Caco-2 (cell line): ENCODE measurements at regions of chr16 and their contacts with region 1.

Region 1: DNA sequence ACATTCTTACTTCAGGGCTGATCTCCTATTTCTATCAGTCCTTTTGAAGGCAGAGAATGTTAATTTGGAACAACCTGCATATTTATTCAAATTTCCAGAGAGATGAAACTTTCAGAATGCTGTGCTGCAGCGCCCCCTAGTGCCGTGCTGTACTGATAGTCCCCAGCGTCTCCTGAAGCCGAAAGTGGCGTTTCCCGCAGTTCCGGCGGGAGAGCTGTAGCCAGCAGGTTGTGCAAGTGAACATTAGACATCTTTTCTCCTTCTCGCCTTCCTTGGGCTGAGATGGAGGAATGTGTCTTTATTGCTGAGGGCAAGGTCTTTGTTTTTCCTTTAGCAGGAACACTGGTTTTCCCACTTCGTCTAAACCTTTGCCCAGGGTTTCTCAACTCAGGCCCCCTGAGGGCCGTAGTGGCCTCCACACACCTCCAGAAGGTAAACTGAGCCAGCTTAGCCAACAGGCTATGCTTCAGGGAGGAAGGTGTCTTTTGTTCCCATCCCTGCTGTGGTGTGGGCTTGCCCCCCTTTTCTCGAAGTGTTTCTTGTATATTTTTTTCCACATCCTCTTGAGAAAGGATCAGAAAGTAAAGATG is 26.4 kb downstream of the USP10 start:
- DNase-seq: peak; percentile 94 to 95
- H3K4me3 ChIP-seq: peak overlapping the region; percentile 21
- H3K4me3 Mint-ChIP-seq: peak overlapping the region; percentile 68
- H3K27ac Mint-ChIP-seq: peak overlapping the region; percentile 61
- H3K4me1 ChIP-seq: peaks cover 56% of the 10 kb centered on the region
- H3K4me1 Mint-ChIP-seq: peaks cover 62% of the 10 kb centered on the region
- H3K27me3 ChIP-seq: no peaks in the 10 kb centered on the region
- H3K27me3 Mint-ChIP-seq: no peaks in the 10 kb centered on the region
- CTCF ChIP-seq: peak; percentile 98 to 99

Region 2: GRCh38 chr16:84511180-84511824 is 214.9 kb before region 1 on chr16:
- CTCF ChIA-PET with region 1: interaction called, 4 read pairs
- POLR2A ChIA-PET with region 1: no interaction called
- intact Hi-C with region 1: loop called (anchors 1 kb)
- DNase-seq: peak; percentile 78 to 88
- H3K4me3 ChIP-seq: no peak overlapping the region
- H3K4me3 Mint-ChIP-seq: peak overlapping the region; percentile 21
- H3K27ac Mint-ChIP-seq: peak overlapping the region; percentile 56
- H3K4me1 ChIP-seq: peaks cover 36% of the 10 kb centered on the region
- H3K4me1 Mint-ChIP-seq: peaks cover 43% of the 10 kb centered on the region
- H3K27me3 ChIP-seq: no peaks in the 10 kb centered on the region
- H3K27me3 Mint-ChIP-seq: no peaks in the 10 kb centered on the region
- CTCF ChIP-seq: peak; percentile 91 to 95

Region 3: DNA sequence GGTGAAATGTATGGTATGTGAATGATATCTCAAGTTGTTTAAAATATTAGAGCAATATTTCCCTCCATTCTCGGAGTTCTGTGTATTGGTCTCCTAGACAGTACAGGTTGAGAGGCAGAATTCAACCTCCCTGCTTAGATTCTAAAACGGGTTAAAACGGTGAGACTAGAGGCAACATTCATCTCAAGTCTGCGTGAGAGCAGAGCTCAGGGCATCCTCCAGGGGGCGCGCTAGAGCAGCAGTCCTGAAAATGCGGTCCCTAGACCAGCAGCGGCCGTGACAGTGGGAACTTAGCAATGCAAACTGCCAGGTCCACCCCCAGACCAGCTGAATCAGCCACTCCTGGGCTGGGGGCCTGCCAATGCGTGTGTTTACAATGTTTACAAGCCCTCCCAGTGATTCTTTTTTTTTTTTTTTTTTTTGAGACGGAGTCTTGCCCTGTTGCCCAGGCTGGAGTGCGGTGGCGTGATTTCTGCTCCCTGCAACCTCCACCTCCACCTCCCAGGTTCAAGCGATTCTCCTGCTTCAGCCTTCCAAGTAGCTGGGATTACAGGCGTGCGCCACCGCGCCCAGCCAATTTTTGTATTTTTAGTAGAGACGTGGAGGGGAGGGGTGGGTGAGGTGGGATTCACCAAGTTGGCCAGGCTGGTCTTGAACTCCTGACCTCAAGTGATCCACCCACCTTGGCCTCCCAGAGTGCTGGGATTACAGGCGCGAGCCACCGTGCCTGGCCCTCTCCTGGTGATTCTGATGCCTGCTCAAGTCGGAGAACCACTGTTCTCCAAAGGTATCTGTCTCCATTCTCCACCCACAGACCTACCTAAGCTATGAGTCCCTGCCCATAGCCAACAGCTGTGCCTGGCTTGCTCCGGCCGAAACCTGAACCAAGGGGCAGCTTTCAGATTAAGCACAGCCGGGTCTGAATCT is 53.6 kb before region 1 on chr16:
- CTCF ChIA-PET with region 1: interaction called, 51 read pairs
- POLR2A ChIA-PET with region 1: interaction called, 3 read pairs
- intact Hi-C with region 1: loop called (anchors 1 kb)
- DNase-seq: peak; percentile 81 to 89
- H3K4me3 ChIP-seq: no peak overlapping the region
- H3K4me3 Mint-ChIP-seq: no peak overlapping the region
- H3K27ac Mint-ChIP-seq: no peak overlapping the region
- H3K4me1 ChIP-seq: peaks cover 3% of the 10 kb centered on the region; the same call in 1 of the 2 replicates
- H3K4me1 Mint-ChIP-seq: no peaks in the 10 kb centered on the region
- H3K27me3 ChIP-seq: no peaks in the 10 kb centered on the region
- H3K27me3 Mint-ChIP-seq: no peaks in the 10 kb centered on the region
- CTCF ChIP-seq: peak; percentile 97 to 98

Region 4: DNA sequence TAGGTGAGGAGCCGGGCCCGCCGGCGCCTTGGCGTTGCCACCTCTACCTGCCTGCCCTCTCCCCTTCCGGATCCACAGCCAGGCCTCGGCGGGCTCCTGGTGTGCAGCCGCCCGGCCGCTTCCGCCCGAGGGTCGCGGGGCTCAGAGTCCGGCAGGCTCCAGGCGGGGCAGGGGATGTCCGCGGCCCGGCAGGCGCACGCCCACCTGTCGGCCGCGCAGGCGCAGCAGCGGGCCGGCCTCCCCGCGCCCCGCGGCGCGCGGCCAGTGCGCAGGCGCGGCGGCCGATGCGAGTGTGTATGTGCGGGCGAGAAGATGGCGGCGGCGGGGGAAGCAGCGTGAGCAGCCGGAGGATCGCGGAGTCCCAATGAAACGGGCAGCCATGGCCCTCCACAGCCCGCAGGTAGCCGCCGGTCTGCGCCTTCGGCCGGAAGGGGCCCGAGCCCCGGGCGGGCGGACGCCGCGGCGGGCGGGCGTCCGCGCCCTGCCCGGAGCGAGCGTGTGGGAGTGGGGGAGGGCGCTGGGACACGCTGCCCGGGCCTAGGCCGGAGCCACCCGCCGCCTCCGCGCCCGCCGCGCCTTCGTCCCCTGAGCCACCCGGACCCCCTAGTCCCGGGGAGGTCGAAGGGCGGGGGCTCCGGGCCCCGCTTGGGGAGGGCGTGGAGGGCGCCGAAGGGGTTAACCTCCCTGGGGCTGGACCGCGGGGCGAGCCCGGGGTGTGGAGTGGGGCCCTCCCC is 26.3 kb before region 1 on chr16 and contains the start of gene USP10:
- CTCF ChIA-PET with region 1: interaction called, 17 read pairs
- POLR2A ChIA-PET with region 1: interaction called, 6 read pairs
- intact Hi-C with region 1: loop called (anchors 1 kb)
- DNase-seq: peak; percentile 86 to 93
- H3K4me3 ChIP-seq: peak within 1 kb of the TSS; percentile 83
- H3K4me3 Mint-ChIP-seq: peak within 1 kb of the TSS; percentile 94
- H3K27ac Mint-ChIP-seq: peak within 1 kb of the TSS; percentile 91
- H3K4me1 ChIP-seq: peaks cover 19% of the 10 kb centered on the region
- H3K4me1 Mint-ChIP-seq: peaks cover 19% of the 10 kb centered on the region
- H3K27me3 ChIP-seq: no peaks in the 10 kb centered on the region
- H3K27me3 Mint-ChIP-seq: no peaks in the 10 kb centered on the region
- CTCF ChIP-seq: no peak
- total RNA-seq, gene USP10: 144 and 147 TPM in 2 replicates

Region 5: DNA sequence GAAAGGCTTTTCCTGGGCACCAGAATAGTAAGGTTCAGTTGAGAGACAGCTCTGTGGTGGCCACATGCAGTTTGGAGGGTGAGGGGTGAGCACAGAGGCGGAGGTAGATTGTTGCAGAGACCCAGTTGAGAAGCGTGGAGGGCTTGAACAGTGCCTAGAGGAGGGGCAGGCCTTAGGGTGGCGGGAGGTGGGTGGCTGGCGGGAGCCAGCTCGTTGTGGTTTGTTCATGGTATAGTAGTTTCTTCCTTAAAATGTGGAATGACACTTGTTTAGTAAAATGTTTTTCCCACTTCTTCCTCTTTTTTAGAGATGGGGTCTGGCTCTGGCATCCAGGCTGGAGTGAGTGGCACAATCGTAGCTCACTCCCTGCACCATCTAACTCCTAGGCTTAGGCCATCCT is 12.1 kb before region 1 on chr16:
- CTCF ChIA-PET with region 1: interaction called, 17 read pairs
- POLR2A ChIA-PET with region 1: interaction called, 3 read pairs
- intact Hi-C with region 1: no loop called
- DNase-seq: no peak
- H3K4me3 ChIP-seq: no peak overlapping the region
- H3K4me3 Mint-ChIP-seq: no peak overlapping the region
- H3K27ac Mint-ChIP-seq: peak overlapping the region; percentile 63
- H3K4me1 ChIP-seq: peaks cover 21% of the 10 kb centered on the region
- H3K4me1 Mint-ChIP-seq: peaks cover 58% of the 10 kb centered on the region
- H3K27me3 ChIP-seq: no peaks in the 10 kb centered on the region
- H3K27me3 Mint-ChIP-seq: no peaks in the 10 kb centered on the region
- CTCF ChIP-seq: no peak

Region 6: DNA sequence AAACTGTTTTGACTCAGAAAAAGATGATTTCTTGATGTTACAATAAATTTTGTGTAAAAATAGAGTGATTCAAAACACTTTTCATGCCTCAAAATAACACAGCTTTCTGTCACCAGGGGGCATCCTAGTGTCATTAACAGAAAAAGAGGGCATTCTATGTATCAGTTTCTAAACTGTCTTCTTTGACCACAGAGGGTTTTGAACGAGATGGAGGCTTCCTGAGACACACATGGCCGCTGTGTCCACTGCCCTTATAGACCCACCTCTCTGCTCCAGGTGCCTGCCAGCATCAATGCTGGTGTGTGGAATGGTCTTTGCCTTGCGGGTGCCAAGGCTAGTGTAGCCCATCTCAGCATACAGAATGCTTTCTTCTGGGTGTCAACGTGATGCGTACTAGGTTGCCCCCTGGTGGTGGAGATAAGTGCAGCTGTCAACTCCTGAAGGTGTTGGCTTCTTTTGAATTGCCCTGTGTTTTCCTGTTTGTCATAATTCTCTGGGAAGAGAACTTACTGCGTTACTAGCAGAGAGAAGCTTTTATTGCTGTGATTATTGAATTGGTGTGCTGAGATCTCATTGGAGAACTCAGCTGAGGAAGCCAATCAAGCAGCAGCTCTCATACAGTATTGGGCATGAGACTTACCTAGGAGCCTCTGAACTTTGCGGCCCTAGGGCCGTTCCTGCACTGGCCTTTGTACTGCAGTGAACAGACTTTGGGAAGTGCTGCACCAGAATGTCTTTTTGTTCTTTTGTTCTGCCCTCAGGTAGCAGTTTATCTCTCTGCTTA is 12.3 kb after region 1 on chr16:
- CTCF ChIA-PET with region 1: interaction called, 30 read pairs
- POLR2A ChIA-PET with region 1: no interaction called
- intact Hi-C with region 1: loop called (anchors 1 kb)
- DNase-seq: peak; percentile 82 to 86
- H3K4me3 ChIP-seq: no peak overlapping the region
- H3K4me3 Mint-ChIP-seq: no peak overlapping the region
- H3K27ac Mint-ChIP-seq: no peak overlapping the region
- H3K4me1 ChIP-seq: peaks cover 7% of the 10 kb centered on the region; the same call in 1 of the 2 replicates
- H3K4me1 Mint-ChIP-seq: peaks cover 25% of the 10 kb centered on the region
- H3K27me3 ChIP-seq: no peaks in the 10 kb centered on the region
- H3K27me3 Mint-ChIP-seq: no peaks in the 10 kb centered on the region
- CTCF ChIP-seq: peak; percentile 91 to 92